ENCODE measurements at regions of chr1 and their contacts with region 1.

Region 1: DNA sequence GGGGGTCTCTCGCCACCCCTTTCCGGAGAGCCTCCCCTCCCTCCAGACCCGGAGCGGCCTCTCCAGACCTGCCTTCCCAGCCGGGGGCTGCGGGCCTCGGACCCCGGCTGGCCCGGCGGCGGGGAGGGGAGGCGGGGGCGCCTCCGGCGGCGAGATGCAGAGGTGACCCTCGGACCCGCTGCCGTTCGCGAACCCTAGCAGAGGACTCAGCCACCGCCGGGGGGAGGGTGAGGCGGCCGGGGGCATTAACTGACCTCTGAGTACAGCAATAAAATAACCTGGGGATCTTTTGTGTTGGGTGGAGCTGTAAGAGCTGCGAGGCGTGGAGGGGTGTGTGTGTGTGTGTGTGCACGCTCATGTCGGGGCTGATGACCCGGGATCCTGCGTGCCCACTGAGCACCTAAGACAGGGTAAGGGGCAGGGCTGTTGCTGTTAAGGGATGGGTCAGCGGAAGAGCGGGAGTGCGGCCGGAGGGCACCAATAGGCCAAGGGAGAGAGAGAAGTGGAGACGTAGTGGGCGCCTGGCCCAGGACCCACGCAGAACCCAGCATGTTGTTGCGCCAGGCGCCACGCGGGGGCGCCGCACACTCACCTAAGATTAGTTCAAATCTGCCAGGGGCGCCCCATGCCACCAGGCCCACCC is 6.3 kb downstream of the HAPLN2 start:
- DNase-seq: peak; percentile 65
- H3K4me3 Mint-ChIP-seq: peak overlapping the region; percentile 36
- H3K27ac Mint-ChIP-seq: no peak overlapping the region
- H3K4me1 Mint-ChIP-seq: peaks cover 7% of the 10 kb centered on the region
- H3K27me3 Mint-ChIP-seq: peaks cover 40% of the 10 kb centered on the region

Region 2: GRCh38 chr1:155527677-155528076 is 1097.9 kb before region 1 on chr1:
- CTCF ChIA-PET with region 1: no interaction called
- intact Hi-C with region 1: no loop called
- DNase-seq: no peak
- H3K4me3 Mint-ChIP-seq: no peak overlapping the region
- H3K27ac Mint-ChIP-seq: no peak overlapping the region
- H3K4me1 Mint-ChIP-seq: peaks cover 42% of the 10 kb centered on the region
- H3K27me3 Mint-ChIP-seq: no peaks in the 10 kb centered on the region

Region 3: GRCh38 chr1:156020292-156021089 is 605.1 kb before region 1 on chr1 and contains the start of gene SSR2:
- CTCF ChIA-PET with region 1: no interaction called
- intact Hi-C with region 1: no loop called
- DNase-seq: peak; percentile 94
- H3K4me3 Mint-ChIP-seq: peak within 1 kb of the TSS; percentile 84
- H3K27ac Mint-ChIP-seq: peak within 1 kb of the TSS; percentile 91
- H3K4me1 Mint-ChIP-seq: peaks cover 28% of the 10 kb centered on the region
- H3K27me3 Mint-ChIP-seq: no peaks in the 10 kb centered on the region
- total RNA-seq, gene SSR2: 141 to 142 TPM

Region 4: DNA sequence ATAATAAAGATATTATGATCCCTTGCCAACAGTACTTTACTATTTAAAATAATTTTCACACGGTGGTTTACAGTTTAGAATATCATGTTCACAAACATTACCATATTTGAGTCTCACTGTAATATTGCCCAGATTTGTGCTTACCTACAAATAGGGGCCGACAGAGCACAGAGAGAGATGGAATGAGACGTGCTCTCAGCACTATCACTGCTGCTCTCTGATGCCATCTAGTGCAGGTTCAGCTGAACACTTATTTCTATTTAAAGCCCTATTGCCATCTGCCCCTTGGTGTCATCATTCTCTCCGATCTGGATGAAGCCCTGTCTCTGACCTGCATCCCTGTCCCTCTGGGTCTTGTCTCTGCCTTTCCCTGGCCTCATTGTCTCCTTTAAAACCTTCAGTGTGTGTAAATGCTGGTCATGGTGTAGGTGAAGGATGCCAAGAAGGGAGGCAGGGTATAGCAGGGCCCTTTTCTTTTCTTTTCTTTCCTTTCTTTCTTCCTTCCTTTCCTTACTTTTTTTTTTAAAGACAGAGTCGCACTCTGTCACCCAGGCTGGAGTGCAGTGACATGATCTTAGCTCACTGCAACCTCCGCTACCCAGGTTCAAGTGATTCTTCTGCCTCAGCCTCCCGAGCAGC is 17.4 kb before region 1 on chr1:
- CTCF ChIA-PET with region 1: interaction called, 12 read pairs
- intact Hi-C with region 1: no loop called
- DNase-seq: peak; percentile 85
- H3K4me3 Mint-ChIP-seq: no peak overlapping the region
- H3K27ac Mint-ChIP-seq: no peak overlapping the region
- H3K4me1 Mint-ChIP-seq: peaks cover 10% of the 10 kb centered on the region
- H3K27me3 Mint-ChIP-seq: peaks cover 2% of the 10 kb centered on the region

Region 5: GRCh38 chr1:156648951-156649350 is 23.4 kb after region 1 on chr1:
- CTCF ChIA-PET with region 1: interaction called, 19 read pairs
- intact Hi-C with region 1: no loop called
- DNase-seq: no peak
- H3K4me3 Mint-ChIP-seq: no peak overlapping the region
- H3K27ac Mint-ChIP-seq: no peak overlapping the region
- H3K4me1 Mint-ChIP-seq: no peaks in the 10 kb centered on the region
- H3K27me3 Mint-ChIP-seq: peaks cover 69% of the 10 kb centered on the region

Region 6: DNA sequence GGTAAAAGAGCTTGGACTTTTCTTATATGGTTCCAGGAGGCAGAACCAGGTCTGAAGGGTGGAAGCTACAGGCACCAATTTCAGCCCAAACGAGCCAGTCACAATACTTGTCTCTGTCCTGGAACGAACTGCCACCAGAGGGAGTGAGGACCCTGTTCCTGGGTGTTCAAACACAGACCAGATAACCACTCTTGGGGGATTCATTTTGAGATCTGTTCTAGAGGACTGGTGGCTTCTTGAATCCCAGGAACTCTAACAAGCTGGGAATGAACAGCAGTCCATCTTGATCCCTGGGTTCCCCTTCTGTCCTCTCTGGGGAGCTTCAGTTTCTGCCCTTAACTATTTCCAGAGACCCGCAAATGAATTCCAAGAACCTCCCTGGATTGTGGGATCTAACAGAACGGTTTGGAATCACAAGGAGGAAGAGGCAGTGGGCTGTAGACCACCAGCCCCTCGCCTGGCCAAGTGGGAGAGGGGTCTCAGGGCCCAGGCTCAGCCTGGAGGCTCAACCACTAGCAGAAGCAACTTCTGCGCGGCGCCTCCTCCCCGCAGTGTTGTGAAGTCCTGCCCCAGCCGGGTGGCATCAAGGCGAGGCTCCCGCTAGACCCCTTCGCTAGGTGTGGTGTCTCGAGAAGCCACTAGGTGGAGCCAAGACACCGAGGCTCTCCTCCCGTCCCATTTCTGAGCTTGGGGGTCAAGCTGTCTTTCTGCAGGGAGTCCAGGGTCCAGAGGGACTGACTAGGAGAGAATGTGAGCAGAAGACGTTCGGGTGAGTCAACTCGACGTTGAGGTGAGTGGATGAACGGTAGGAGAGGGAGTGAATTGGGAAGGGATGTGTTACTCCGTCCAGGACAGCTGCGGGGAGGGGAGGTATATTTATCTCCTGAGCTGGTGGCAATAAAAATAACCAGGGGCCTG is 63.7 kb after region 1 on chr1:
- CTCF ChIA-PET with region 1: interaction called, 123 read pairs
- intact Hi-C with region 1: no loop called
- DNase-seq: peak; percentile 80
- H3K4me3 Mint-ChIP-seq: no peak overlapping the region
- H3K27ac Mint-ChIP-seq: no peak overlapping the region
- H3K4me1 Mint-ChIP-seq: peaks cover 28% of the 10 kb centered on the region
- H3K27me3 Mint-ChIP-seq: peaks cover 46% of the 10 kb centered on the region

Region 7: GRCh38 chr1:157011845-157012244 is 386.3 kb after region 1 on chr1:
- CTCF ChIA-PET with region 1: no interaction called
- intact Hi-C with region 1: no loop called
- DNase-seq: no peak
- H3K4me3 Mint-ChIP-seq: no peak overlapping the region
- H3K27ac Mint-ChIP-seq: no peak overlapping the region
- H3K4me1 Mint-ChIP-seq: no peaks in the 10 kb centered on the region
- H3K27me3 Mint-ChIP-seq: peaks cover 18% of the 10 kb centered on the region

Measured in activated naive CD4-positive, alpha-beta T cell treated with anti-CD3 and anti-CD28 coated beads for 36 hours (primary cell).